ENCODE measurements at regions of chr15 and their contacts with region 1.

Region 1: GRCh38 chr15:65384895-65385858 is 7.4 kb upstream of the IGDCC3 start:
- DNase-seq: peak; percentile 80 to 95 (median 85)
- H3K4me3 ChIP-seq: peak overlapping the region in 2 of 4 donors; percentile 17 to 19
- H3K27ac ChIP-seq: peak overlapping the region in 1 of 5 donors; percentile 38
- H3K4me1 ChIP-seq: peaks cover 0 to 6% of the 10 kb centered on the region in 2 donors
- H3K27me3 ChIP-seq: no peaks in the 10 kb centered on the region
- CTCF ChIP-seq: peak; percentile 86 to 92 (median 90)
- POLR2A ChIP-seq: peak in 1 of 2 donors; percentile 4

Region 2: DNA sequence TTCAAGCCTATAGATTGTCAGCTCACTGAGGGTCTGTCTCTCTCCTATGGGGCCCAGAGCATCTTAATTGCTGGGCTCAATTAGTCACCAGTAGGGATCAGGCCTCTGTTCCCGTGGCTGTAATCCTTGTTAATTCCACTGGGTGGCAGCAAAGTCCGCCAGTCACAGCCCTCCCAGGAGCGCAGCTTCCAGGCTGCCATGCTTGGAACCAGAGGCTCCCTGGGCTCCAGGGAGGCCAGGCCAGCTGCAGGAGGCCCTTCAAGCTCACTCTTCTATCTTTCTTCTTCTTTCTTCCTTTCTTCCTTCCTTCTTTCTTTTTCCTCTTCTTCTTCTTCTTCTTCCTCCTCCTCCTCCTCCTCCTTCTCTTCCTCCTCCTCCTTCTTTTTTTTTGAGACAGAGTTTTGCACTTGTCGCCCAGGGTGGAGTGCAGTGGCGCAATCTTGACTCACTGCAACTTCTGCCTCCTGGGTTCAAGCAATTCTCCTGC is 66.3 kb before region 1 on chr15:
- intact Hi-C with region 1: loop called (anchors 2 to 5 kb)
- DNase-seq: peak; percentile 76 to 93 (median 83)
- H3K4me3 ChIP-seq: no peak overlapping the region
- H3K27ac ChIP-seq: no peak overlapping the region
- H3K4me1 ChIP-seq: peaks cover 0 to 8% of the 10 kb centered on the region in 2 donors
- H3K27me3 ChIP-seq: no peaks in the 10 kb centered on the region
- CTCF ChIP-seq: peak; percentile 80 to 99 (median 96)
- POLR2A ChIP-seq: no peak

Measured in adrenal gland (tissue), 19 donors.